Activated T-helper 2 cell treated with anti-CD3 and anti-CD28 coated beads, Interferon-gamma antibody, Interleukin-2, Interleukin-4, amounts not matched to agents 10 μg/mL and 5 μg/mL and 100 μg/mL, durations not matched to agents 14 hours and 24 hours and 36 hours (primary cell): ENCODE measurements at regions of chr2 and their contacts with region 1.

Region 1: GRCh38 chr2:54680397-54681041 is 42.9 kb upstream of the EML6 start:
- DNase-seq: peak; percentile 39
- H3K4me3 Mint-ChIP-seq: peak overlapping the region; percentile 78
- H3K27ac Mint-ChIP-seq: peak overlapping the region; percentile 65
- H3K4me1 Mint-ChIP-seq: peaks cover 61% of the 10 kb centered on the region
- H3K27me3 Mint-ChIP-seq: peaks cover 54% of the 10 kb centered on the region

Region 2: DNA sequence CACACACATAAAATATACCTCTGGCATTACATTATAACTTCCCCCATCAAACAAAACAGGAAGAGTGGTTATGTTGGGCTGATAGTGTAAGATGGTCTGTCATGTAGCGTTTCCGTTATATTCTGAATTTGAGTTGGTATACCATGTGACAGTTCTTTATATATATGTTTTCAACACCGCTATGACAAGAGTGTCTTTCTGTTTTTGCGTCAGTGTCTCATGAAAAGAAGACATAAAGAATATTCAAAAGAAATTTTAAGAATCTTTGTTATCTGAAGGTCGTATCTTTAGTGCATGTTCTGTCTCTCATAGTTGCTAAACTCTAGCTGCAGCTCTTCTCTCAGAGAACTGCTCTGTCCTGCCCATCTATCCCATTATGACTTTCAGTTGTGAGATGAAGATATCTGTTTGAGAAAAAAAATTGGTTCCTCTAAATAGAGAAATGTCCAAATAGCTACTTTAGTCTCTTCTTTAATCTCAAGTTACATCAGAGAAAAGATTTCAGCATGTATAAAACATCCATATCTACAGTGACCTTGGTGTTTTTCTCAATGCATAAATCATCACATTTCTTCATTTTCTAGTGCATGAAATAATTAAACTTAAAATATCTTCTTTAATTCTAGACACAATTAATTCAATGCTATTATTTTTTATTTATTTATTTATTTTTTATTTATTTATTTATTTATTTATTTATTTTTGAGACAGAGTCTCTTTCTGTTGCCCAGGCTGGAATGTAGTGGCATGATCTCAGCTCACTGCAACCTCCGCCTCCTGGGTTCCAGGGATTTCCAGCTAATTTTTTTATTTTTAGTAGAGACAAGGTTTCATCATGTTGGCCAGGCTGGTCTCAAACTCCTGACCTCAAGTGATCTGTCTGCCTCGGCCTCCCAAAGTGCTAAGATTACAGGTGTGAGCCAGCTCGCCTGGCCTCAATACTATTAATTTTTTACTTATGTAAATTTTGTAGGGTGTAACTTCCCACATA is 685.4 kb before region 1 on chr2:
- intact Hi-C with region 1: loop called (anchors 10 kb)
- DNase-seq: no peak
- H3K4me3 Mint-ChIP-seq: peak overlapping the region; percentile 43
- H3K27ac Mint-ChIP-seq: peak overlapping the region; percentile 72
- H3K4me1 Mint-ChIP-seq: peaks cover 19% of the 10 kb centered on the region
- H3K27me3 Mint-ChIP-seq: no peaks in the 10 kb centered on the region

Region 3: GRCh38 chr2:54531558-54531957 is 149.0 kb before region 1 on chr2:
- intact Hi-C with region 1: loop called (anchors 5 kb)
- DNase-seq: no peak
- H3K4me3 Mint-ChIP-seq: no peak overlapping the region
- H3K27ac Mint-ChIP-seq: no peak overlapping the region
- H3K4me1 Mint-ChIP-seq: peaks cover 36% of the 10 kb centered on the region
- H3K27me3 Mint-ChIP-seq: peaks cover 7% of the 10 kb centered on the region

Region 4: GRCh38 chr2:54606393-54606969 is 74.0 kb before region 1 on chr2:
- intact Hi-C with region 1: loop called (anchors 2 kb)
- DNase-seq: no peak
- H3K4me3 Mint-ChIP-seq: peak overlapping the region; percentile 31
- H3K27ac Mint-ChIP-seq: peak overlapping the region; percentile 81
- H3K4me1 Mint-ChIP-seq: peaks cover 76% of the 10 kb centered on the region
- H3K27me3 Mint-ChIP-seq: no peaks in the 10 kb centered on the region

Region 5: GRCh38 chr2:54665436-54665856 is 15.1 kb before region 1 on chr2:
- intact Hi-C with region 1: loop called (anchors 2 kb)
- DNase-seq: no peak
- H3K4me3 Mint-ChIP-seq: no peak overlapping the region
- H3K27ac Mint-ChIP-seq: no peak overlapping the region
- H3K4me1 Mint-ChIP-seq: peaks cover 10% of the 10 kb centered on the region
- H3K27me3 Mint-ChIP-seq: no peaks in the 10 kb centered on the region

Region 6: DNA sequence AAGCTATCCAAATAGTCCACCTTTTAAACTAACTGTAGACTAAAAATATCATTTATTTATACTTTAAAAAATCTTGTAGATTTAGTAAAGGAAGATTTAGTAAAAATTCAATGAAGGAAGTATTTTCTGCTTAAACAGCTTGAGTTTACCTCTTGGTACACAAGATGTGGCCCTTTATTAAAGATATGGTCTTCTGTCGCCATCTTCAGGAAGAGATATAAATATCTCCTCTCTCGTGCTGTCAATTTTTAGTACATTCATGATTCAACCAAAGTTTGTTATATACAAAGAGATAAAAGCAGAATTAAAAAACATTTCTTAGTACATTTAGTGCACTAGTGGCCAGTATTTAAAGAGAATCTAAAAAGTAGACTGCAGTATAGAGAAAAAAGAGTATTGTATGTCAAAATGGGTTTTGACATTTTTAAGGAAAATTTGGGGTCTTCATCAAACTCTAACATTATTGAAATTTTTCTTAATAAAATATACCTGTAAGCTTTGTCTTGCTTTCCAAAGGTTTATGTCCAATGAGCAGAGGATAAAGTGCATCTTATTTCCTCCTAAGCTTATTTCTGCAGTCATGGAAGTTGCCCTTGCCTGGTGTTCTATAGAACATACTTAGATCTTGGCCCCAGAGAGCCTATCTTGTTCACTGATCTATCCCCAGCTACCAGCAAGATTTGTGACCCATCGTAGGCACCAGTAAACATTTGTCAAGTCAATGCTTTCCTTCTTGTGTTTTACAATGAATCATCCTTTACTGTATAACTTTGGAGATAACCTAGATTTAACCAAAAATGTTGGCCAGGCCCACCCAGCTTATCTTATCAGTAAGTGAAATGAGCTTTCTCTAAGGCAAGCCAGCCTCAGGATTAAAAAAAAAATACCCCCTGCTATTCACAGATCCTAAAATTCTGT is 24.4 kb after region 1 on chr2:
- intact Hi-C with region 1: loop called (anchors 2 kb)
- DNase-seq: no peak
- H3K4me3 Mint-ChIP-seq: no peak overlapping the region
- H3K27ac Mint-ChIP-seq: no peak overlapping the region
- H3K4me1 Mint-ChIP-seq: peaks cover 15% of the 10 kb centered on the region
- H3K27me3 Mint-ChIP-seq: peaks cover 53% of the 10 kb centered on the region